ENCODE measurements at regions of chrX and their contacts with region 1.

Region 1: DNA sequence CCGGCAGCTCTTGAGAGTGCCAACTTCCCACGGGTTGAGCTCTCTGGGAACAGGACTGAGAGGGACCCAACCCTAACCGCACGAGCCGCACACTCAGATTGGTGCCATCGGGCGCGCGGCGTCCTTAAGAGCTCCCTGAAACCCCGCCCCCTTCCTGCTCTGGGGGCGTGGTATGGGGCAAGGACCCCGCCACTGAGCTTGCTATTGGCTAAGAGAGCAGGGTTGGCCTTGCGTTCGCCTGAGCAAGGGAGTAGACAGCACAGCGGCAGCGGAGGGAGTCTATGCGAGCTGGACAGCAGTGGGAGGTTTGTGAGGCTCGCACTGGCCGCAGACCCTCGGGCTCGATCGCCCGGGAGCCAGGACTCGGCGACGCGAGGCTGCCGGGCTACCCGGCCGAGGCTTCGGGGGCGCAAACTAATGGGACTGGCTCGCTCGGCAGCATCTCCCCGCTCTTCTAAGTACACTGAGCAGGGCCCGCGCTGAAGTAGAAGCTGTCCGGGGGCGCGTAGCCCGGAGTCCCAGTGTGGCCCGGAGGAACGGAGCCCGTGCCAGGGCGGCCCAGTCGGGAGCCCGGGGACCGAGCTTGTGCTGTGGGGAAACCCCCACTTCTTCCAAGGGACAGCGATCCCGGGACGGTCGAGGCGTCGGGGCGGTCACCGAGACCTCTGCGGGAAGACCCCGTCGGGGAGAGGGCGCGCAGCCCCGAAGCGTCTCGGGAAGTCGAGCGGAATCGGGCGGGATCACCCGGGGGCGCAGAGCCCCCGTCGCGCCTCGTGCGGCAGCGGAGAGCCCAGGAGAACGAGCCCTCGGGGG is at the start of gene EFNB1:
- DNase-seq: peak; percentile 96
- ATAC-seq: peak; percentile 65
- H3K4me3 ChIP-seq: peak within 1 kb of the TSS; percentile 93
- H3K27ac ChIP-seq: peak within 1 kb of the TSS; percentile 87
- H3K4me1 ChIP-seq: peaks cover 32% of the 10 kb centered on the region
- H3K27me3 ChIP-seq: no peaks in the 10 kb centered on the region
- CTCF ChIP-seq: no peak
- total RNA-seq, gene EFNB1: 102 and 142 TPM in 2 replicates

Region 2: GRCh38 chrX:68681443-68681941 is 147.5 kb before region 1 on chrX:
- CTCF ChIA-PET with region 1: no interaction called
- POLR2A ChIA-PET with region 1: no interaction called
- intact Hi-C with region 1: no loop called
- DNase-seq: no peak
- ATAC-seq: no peak
- H3K4me3 ChIP-seq: no peak overlapping the region
- H3K27ac ChIP-seq: no peak overlapping the region
- H3K4me1 ChIP-seq: no peaks in the 10 kb centered on the region
- H3K27me3 ChIP-seq: no peaks in the 10 kb centered on the region
- CTCF ChIP-seq: no peak

Region 3: DNA sequence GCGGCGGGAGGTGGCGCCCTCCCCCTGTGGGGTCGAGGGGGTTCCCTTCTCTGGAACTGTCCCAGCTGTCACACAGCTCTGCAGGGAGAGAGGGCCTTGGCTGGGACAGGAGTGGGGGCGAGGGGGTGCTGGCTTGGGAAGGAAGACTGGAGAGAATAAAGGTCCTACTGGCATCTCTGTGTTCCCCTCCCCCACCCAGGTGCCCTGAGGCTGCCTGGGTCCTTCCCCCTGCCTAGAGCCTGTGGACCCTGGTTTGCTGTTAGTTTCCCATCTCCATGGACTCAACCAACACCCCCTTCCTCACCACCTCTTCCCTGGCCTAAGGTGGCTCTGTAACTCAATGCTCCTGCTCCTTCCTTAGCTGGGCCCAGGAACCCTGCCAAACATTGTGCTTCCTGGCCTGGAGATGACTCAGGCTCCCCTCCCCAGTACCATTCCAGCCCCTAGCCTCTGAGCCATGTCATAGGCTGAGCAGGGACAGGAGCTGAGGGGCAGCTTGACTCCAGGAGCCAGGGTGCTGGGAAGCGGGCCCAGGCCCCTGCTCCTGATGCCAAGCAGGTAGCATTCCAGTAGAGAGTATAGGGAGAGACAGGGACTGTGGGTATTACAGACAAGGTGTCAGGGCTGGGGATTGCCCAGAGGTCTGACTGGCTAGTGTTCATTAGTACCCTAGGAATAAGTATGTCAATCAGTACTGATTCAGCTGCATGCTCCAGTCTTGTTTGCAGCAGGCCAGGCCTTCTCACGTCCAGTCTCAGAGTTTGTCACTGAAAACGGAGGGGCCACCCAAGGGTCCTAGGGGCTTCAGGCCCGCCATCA is 100.6 kb after region 1 on chrX:
- CTCF ChIA-PET with region 1: no interaction called
- POLR2A ChIA-PET with region 1: no interaction called
- intact Hi-C with region 1: loop called (anchors 5 kb)
- DNase-seq: peak; percentile 89
- ATAC-seq: peak; percentile 92
- H3K4me3 ChIP-seq: no peak overlapping the region
- H3K27ac ChIP-seq: peak overlapping the region; percentile 55
- H3K4me1 ChIP-seq: peaks cover 27% of the 10 kb centered on the region
- H3K27me3 ChIP-seq: no peaks in the 10 kb centered on the region
- CTCF ChIP-seq: no peak

Region 4: DNA sequence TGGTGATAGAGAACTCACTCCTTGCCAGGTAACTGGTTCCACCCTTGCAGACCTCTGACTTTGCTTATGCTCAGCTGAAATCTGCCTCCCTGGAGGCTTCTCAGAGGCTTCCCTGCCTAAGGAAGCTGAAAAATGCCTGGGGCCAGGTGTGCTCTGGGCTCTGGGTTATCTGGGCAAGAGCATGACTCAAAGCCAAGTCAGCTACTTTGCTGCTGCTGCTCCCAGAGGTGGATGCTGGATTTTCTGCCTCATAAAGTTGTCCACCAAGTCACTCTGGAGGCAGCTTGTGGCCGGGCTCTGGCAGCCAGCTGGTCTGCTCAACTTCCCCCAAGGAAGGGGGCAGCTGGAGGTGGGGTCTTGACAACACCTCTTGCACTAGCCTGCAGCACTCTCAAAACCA is 203.7 kb after region 1 on chrX:
- CTCF ChIA-PET with region 1: interaction called, 14 read pairs
- POLR2A ChIA-PET with region 1: interaction called, 62 read pairs
- intact Hi-C with region 1: loop called (anchors 1 kb)
- DNase-seq: peak; percentile 92
- ATAC-seq: peak; percentile 83
- H3K4me3 ChIP-seq: no peak overlapping the region
- H3K27ac ChIP-seq: peak overlapping the region; percentile 95
- H3K4me1 ChIP-seq: peaks cover 46% of the 10 kb centered on the region
- H3K27me3 ChIP-seq: no peaks in the 10 kb centered on the region
- CTCF ChIP-seq: 0 out of 2 replicates have a peak, but pooled peaks have one; percentile 18

Region 5: GRCh38 chrX:69060631-69061408 is 231.9 kb after region 1 on chrX:
- CTCF ChIA-PET with region 1: interaction called, 48 read pairs
- POLR2A ChIA-PET with region 1: interaction called, 6 read pairs
- intact Hi-C with region 1: loop called (anchors 1 kb)
- DNase-seq: peak; percentile 61
- ATAC-seq: peak; percentile 86
- H3K4me3 ChIP-seq: no peak overlapping the region
- H3K27ac ChIP-seq: no peak overlapping the region
- H3K4me1 ChIP-seq: peaks cover 4% of the 10 kb centered on the region; the same call in 1 of the 2 replicates
- H3K27me3 ChIP-seq: no peaks in the 10 kb centered on the region
- CTCF ChIP-seq: peak; percentile 58

Region 6: DNA sequence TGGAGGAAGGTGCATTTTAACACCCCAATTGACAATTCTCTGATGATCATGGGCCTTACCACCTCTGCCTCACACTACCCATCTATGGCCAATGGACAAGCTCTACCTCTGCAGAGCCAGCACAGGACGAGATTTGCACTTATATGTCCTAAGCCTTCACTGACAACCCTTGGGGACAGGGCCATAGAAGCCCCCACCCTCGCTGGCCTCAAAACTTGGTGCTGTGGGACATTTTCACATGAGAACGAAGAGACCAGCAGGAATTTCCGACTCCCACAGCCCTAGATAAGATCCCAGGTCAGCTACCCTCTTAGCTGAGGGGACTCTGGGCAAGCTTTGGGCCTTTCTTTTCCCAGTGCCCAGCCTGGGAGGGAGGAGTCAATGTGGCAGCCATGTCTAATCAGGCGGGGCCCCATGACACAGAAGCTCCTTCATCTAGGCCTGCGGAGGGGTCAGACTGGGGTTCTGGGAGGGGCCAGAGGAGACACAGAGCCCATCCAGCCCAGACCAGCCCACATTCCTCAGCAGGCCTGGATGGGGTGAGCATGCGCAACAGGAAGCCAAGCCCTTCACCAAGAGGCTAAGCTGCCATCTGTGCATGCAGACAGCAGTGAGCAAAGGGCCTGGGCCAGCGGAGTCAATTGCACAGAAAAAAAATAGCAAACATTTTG is 324.2 kb after region 1 on chrX:
- CTCF ChIA-PET with region 1: no interaction called
- POLR2A ChIA-PET with region 1: interaction called, 4 read pairs
- intact Hi-C with region 1: loop called (anchors 5 kb)
- DNase-seq: no peak
- ATAC-seq: no peak
- H3K4me3 ChIP-seq: no peak overlapping the region
- H3K27ac ChIP-seq: peak overlapping the region; percentile 96
- H3K4me1 ChIP-seq: peaks cover 39% of the 10 kb centered on the region
- H3K27me3 ChIP-seq: no peaks in the 10 kb centered on the region
- CTCF ChIP-seq: no peak

Measured in PC-3 (cell line).